ENCODE measurements at regions of chr14 and their contacts with region 1.

Region 1: DNA sequence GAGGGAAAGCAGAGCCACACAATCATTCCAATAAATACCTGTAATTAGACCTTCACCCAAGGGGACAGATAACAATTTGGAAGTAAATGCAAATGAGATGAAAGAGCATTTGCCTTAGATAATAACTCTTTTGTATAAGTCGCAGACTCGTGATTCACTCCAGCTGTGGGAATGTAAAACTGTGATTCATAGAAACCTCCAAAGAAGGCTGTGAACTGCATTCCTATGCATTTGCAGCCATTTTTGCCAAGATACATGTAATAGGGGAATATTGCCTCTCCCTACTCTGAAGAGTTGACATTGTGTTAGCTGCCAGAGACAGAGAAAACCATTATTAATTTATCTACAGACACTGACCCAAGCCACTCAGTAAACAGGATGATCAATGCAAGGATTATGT is 181.9 kb upstream of the ARHGAP5 start:
- DNase-seq: no peak
- ATAC-seq: no peak
- H3K4me3 ChIP-seq: no peak overlapping the region
- H3K27ac ChIP-seq: no peak overlapping the region
- H3K4me1 ChIP-seq: peaks cover 0 to 8% of the 10 kb centered on the region in 2 experiments; a peak in 1 of 4 replicates
- H3K27me3 ChIP-seq: no peaks in the 10 kb centered on the region
- CTCF ChIP-seq: no peak
- POLR2A ChIP-seq: no peak
- RAD21 ChIP-seq: no peak

Region 2: DNA sequence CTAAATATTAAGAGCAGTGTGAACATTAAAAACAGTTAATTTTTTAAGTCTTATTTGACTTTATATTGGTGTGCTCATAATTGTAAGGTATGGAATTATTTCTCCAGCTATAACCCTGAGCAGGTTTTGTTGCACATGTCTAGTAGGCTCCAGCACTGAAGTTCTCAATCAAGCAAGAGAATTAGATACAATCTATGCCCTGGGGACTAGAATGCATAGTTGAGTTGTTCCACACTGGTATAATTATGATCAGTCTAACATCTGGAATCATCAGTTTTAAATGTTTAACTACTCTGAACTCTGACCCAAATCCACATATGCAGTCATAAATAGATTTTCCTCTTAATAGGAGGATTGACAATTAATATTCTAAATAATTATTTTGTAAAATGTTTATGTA is 75.9 kb before region 1 on chr14:
- CTCF ChIA-PET with region 1: no interaction called
- POLR2A ChIA-PET with region 1: no interaction called
- RAD21 ChIA-PET with region 1: no interaction called
- intact Hi-C with region 1: no loop called
- DNase-seq: no peak
- ATAC-seq: no peak
- H3K4me3 ChIP-seq: no peak overlapping the region
- H3K27ac ChIP-seq: peak overlapping the region; percentile 70; the same call in 1 of the 2 replicates
- H3K4me1 ChIP-seq: peaks cover 18 to 21% of the 10 kb centered on the region in 2 experiments
- H3K27me3 ChIP-seq: no peaks in the 10 kb centered on the region
- CTCF ChIP-seq: no peak
- POLR2A ChIP-seq: no peak
- RAD21 ChIP-seq: no peak

Region 3: DNA sequence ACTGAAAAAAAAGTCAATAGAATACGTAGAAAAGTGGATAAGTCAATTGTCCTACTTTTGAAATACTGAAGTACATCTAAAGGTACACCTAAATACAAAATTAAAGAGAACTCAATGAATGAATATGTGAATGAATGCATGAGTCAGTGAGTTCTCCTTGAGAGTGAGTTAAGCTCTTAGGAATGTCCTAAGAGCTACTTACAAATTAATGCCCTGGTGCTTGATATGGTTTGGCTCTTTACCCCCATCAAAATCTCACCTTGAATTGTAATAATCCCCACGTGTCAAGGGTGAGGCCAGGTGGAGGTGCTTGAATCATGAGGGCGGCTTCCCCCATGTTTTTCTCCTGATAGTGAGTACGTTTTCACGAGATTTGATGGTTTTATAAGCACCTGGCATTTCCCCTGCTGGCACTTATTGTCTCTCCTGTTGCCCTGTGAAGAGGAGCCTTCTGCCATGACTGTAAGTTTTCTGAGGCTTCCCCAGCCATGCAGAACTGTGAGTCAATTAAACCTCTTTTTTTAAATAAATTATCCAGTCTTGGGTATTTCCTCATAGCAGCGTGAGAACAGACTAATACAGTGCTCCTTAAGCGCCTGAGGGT is 10.3 kb before region 1 on chr14:
- CTCF ChIA-PET with region 1: no interaction called
- POLR2A ChIA-PET with region 1: no interaction called
- RAD21 ChIA-PET with region 1: no interaction called
- intact Hi-C with region 1: loop called (anchors 1 kb)
- DNase-seq: no peak
- ATAC-seq: peak; percentile 60; the same call in 1 of the 2 replicates
- H3K4me3 ChIP-seq: no peak overlapping the region
- H3K27ac ChIP-seq: no peak overlapping the region
- H3K4me1 ChIP-seq: peaks cover 0 to 23% of the 10 kb centered on the region in 2 experiments; a peak in 3 of 4 replicates
- H3K27me3 ChIP-seq: no peaks in the 10 kb centered on the region
- CTCF ChIP-seq: no peak
- POLR2A ChIP-seq: no peak
- RAD21 ChIP-seq: no peak

Measured in HCT116 (cell line).